Activated CD4-positive, alpha-beta memory T cell treated with anti-CD3 and anti-CD28 coated beads for 36 hours (primary cell): ENCODE measurements at regions of chr20 and their contacts with region 1.

Region 1: GRCh38 chr20:17569616-17570346 is at the start of gene DSTN:
- DNase-seq: peak; percentile 90
- H3K4me3 Mint-ChIP-seq: peak within 1 kb of the TSS; percentile 90
- H3K27ac Mint-ChIP-seq: peak within 1 kb of the TSS; percentile 79
- H3K4me1 Mint-ChIP-seq: peaks cover 27% of the 10 kb centered on the region
- H3K27me3 Mint-ChIP-seq: no peaks in the 10 kb centered on the region
- total RNA-seq, gene DSTN: 91.2 to 94.3 TPM

Region 2: GRCh38 chr20:17431621-17432364 is 138.0 kb before region 1 on chr20:
- CTCF ChIA-PET with region 1: no interaction called
- POLR2A ChIA-PET with region 1: no interaction called
- intact Hi-C with region 1: no loop called
- DNase-seq: peak; percentile 57
- H3K4me3 Mint-ChIP-seq: no peak overlapping the region
- H3K27ac Mint-ChIP-seq: no peak overlapping the region
- H3K4me1 Mint-ChIP-seq: no peaks in the 10 kb centered on the region
- H3K27me3 Mint-ChIP-seq: peaks cover 17% of the 10 kb centered on the region

Region 3: GRCh38 chr20:17525650-17526049 is 44.1 kb before region 1 on chr20:
- CTCF ChIA-PET with region 1: no interaction called
- POLR2A ChIA-PET with region 1: no interaction called
- intact Hi-C with region 1: no loop called
- DNase-seq: peak; percentile 33
- H3K4me3 Mint-ChIP-seq: no peak overlapping the region
- H3K27ac Mint-ChIP-seq: no peak overlapping the region
- H3K4me1 Mint-ChIP-seq: peaks cover 8% of the 10 kb centered on the region
- H3K27me3 Mint-ChIP-seq: peaks cover 3% of the 10 kb centered on the region

Region 4: DNA sequence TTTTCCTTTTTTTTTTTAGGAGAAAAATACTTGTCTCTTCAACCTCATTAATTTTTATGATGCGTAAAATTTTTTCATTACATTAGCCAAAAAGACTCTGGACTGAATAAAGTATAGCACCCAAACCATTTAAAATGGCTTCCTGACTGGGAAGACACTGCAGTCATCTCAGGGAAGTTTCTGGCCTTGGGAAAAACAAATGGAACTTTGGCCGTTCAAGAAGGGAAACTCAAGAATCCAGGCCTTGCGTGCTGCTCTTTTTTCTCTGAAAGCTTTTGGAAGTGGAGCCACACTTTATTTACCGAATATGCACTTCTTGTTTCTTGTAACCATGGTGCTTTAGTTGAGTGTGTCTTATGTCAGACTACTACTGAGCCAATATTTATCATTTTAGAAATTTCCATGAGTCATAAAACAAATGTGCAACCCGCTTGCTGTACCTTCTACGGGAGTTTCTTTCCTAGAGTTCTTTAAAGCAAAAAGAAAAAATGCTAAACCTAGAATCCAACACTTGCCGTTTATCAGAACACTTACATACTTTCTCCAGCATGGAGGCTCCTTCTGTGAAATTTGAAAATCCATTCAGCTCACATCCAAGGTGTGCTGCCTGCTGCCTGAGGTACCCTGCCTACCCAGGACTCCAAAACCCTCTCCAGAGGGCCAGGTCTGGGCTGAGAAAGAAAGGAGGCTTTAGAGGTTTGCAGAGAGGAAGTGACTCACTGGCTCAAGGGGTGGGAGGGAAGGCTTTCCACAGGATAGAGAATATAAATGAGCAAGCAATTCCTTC is 11.4 kb before region 1 on chr20:
- CTCF ChIA-PET with region 1: interaction called, 12 read pairs
- POLR2A ChIA-PET with region 1: interaction called, 31 read pairs
- intact Hi-C with region 1: loop called (anchors 1 kb)
- DNase-seq: peak; percentile 59
- H3K4me3 Mint-ChIP-seq: peak overlapping the region; percentile 14
- H3K27ac Mint-ChIP-seq: peak overlapping the region; percentile 87
- H3K4me1 Mint-ChIP-seq: peaks cover 38% of the 10 kb centered on the region
- H3K27me3 Mint-ChIP-seq: no peaks in the 10 kb centered on the region

Region 5: DNA sequence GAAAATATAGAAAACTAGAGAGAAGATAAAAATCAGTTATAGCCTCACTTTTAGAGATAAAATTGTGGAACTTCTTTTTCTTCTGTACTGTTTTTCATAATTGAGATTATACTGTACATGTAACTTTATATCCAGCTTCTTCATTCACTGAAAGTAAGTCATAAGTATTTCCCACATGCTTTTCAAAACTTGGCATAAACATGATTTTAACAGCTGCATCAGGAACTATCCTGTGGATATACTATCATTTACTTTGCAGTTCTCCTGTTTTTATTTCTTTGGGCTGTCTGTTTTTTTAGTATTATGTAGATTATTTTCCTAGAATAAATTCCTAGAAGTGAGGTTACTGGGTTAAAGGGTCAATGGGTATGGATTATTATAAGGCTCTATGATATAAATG is 14.9 kb after region 1 on chr20:
- CTCF ChIA-PET with region 1: interaction called, 8 read pairs
- POLR2A ChIA-PET with region 1: interaction called, 14 read pairs
- intact Hi-C with region 1: loop called (anchors 2 kb)
- DNase-seq: no peak
- H3K4me3 Mint-ChIP-seq: no peak overlapping the region
- H3K27ac Mint-ChIP-seq: no peak overlapping the region
- H3K4me1 Mint-ChIP-seq: peaks cover 27% of the 10 kb centered on the region
- H3K27me3 Mint-ChIP-seq: no peaks in the 10 kb centered on the region

Region 6: GRCh38 chr20:17611540-17612286 is 41.9 kb after region 1 on chr20:
- CTCF ChIA-PET with region 1: interaction called, 9 read pairs
- POLR2A ChIA-PET with region 1: interaction called, 5 read pairs
- intact Hi-C with region 1: loop called (anchors 1 kb)
- DNase-seq: peak; percentile 12
- H3K4me3 Mint-ChIP-seq: peak overlapping the region; percentile 57
- H3K27ac Mint-ChIP-seq: peak overlapping the region; percentile 89
- H3K4me1 Mint-ChIP-seq: peaks cover 38% of the 10 kb centered on the region
- H3K27me3 Mint-ChIP-seq: no peaks in the 10 kb centered on the region